ENCODE measurements at regions of chr12 and their contacts with region 1.

Region 1: DNA sequence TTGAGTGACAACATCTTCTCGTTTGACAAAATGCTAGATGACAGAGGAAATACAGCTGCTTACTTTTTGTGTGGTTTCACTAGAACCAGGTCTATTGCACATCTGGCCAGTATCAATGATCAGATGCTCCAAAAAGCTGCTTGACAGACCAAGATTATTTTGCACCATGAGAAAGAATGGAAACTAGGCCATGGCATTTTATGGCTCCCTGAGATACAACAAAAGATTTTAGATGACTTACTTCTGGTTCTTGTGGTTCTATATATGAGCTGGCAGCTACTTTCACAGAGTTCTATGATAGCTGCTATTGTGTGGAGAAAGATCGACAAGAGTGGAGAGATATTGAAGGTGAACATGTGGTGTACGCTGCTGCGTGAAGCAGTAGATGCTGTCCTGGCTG is 25.9 kb upstream of the PPFIBP1 start:
- DNase-seq: no peak
- ATAC-seq: no peak

Region 2: DNA sequence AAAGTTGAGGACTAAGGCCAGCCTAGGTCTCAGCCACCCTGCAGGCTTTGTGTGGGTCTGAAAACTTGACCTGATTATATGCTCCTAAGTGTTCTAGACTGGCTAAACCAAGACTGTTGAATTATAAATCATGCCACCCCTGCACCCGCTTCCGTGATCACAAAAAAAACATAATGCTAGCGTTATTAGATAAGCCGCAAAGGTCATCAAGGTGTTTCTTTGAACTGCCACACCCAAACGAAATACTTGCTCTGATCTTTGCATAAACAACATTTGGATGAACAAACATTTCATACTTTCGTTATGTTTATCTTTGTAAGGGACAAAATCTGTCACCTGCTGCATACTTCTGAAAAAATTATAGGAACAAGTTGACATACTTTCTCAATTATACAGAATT is 49.1 kb before region 1 on chr12:
- intact Hi-C with region 1: loop called (anchors 10 kb)
- DNase-seq: no peak
- ATAC-seq: no peak

Region 3: GRCh38 chr12:27710592-27711316 is 212.6 kb after region 1 on chr12 and contains the start of gene MRPS35:
- intact Hi-C with region 1: no loop called
- DNase-seq: peak; percentile 95
- ATAC-seq: peak; percentile 99
- total RNA-seq, gene MRPS35: 63.3 TPM

Measured in left ventricle myocardium superior (tissue), 1 donor.